Left cardiac atrium (tissue), 4 donors: ENCODE measurements at regions of chr10 and their contacts with region 1.

Region 1: DNA sequence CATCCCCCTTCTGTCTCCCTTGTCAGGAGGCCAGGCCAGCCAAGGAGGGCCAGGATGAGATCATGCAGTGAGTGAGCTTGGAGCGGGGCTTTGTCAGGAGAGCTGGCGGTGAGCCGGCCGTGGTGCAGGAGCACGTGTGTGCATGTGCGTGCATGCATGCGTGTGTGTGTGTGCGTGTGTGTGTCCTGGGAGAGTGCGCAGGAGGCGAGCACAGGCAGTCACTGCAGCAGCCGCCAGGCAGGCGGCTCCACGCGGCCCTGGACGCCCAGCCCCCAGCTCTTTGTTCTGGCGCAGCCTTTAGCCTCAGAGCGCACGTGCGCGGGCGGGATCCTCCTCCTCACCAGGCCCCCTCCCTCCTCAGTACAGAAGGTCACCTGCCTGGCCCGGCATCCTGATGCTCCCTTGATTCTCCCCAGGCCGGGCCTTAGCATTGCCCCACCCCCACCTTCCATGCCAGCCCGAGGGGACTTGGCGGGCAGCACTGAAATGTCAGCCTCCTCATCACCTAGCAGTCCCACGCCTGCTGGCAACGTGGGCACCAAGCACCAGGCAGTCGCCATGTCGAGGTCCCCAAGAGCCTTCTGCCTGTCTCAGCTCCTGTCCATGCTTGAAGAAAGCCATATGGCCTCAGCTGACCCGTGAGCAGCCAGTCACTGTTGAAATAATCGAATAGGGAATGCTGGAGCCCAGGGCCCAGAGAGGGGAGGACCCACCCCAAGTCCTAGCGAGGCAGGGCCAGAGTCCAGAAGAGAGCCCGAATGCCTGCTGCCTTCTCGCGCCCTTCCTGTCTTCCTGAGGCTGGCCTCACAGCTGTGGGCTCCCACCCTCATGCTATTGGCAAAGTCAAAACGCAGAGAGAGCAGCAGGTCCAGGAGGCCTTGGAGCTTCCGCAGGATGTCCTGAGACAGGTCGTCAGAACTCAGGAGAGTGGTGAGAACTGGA is 125.9 kb upstream of the PPIF start:
- DNase-seq: peak; percentile 82
- ATAC-seq: peak; percentile 57 to 70

Region 2: GRCh38 chr10:79274279-79275104 is 53.1 kb after region 1 on chr10:
- intact Hi-C with region 1: loop called in 1 of 2 experiments (anchors 10 kb)
- DNase-seq: peak; percentile 87
- ATAC-seq: peak; percentile 81 to 88

Region 3: GRCh38 chr10:79445141-79445976 is 224.0 kb after region 1 on chr10 and contains the start of gene ZCCHC24:
- intact Hi-C with region 1: no loop called
- DNase-seq: peak; percentile 99
- ATAC-seq: peak; percentile 93 to 94
- total RNA-seq, gene ZCCHC24: 52.9 to 56.6 TPM